Endothelial cell of umbilical vein (primary cell): ENCODE measurements at regions of chr12 and their contacts with region 1.

Region 1: GRCh38 chr12:26274441-26275312 is 79.3 kb downstream of the SSPN start:
- DNase-seq: peak; percentile 98
- H3K4me3 ChIP-seq: no peak overlapping the region
- H3K27ac ChIP-seq: peak overlapping the region; percentile 93
- H3K4me1 ChIP-seq: peaks cover 34% of the 10 kb centered on the region
- H3K27me3 ChIP-seq: no peaks in the 10 kb centered on the region
- CTCF ChIP-seq: no peak
- POLR2A ChIP-seq: peak; percentile 57

Region 2: DNA sequence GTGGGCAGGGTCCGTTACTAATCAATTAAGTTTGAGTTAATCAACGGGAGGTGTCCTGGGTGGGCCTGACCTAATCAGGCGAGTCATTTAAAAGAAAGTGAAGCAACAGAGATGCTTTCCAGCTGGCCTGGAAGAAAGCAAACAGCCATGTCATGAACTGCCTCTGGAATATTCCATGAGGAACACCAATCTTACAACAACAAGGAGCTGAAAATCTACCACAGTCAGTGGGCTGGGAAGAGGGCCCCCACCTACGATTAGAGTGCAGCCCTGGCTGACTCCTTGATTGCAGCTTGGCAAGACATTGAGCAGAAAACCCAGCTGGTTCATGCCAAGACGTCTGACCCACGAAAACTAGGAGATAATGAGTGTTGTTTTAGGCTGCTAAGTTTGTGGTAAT is 23.1 kb before region 1 on chr12:
- CTCF ChIA-PET with region 1: interaction called, 6 read pairs
- POLR2A ChIA-PET with region 1: no interaction called
- dilution Hi-C with region 1: no loop called
- intact Hi-C with region 1: loop called (anchors 1 kb)
- DNase-seq: no peak
- H3K4me3 ChIP-seq: no peak overlapping the region
- H3K27ac ChIP-seq: no peak overlapping the region
- H3K4me1 ChIP-seq: peaks cover 5% of the 10 kb centered on the region
- H3K27me3 ChIP-seq: no peaks in the 10 kb centered on the region
- CTCF ChIP-seq: no peak
- POLR2A ChIP-seq: no peak

Region 3: GRCh38 chr12:26298785-26299621 is 24.3 kb after region 1 on chr12:
- CTCF ChIA-PET with region 1: interaction called, 7 read pairs
- POLR2A ChIA-PET with region 1: no interaction called
- dilution Hi-C with region 1: no loop called
- intact Hi-C with region 1: loop called (anchors 1 kb)
- DNase-seq: peak; percentile 80
- H3K4me3 ChIP-seq: peak overlapping the region in 1 of 3 experiments; percentile 66
- H3K27ac ChIP-seq: peak overlapping the region; percentile 71
- H3K4me1 ChIP-seq: peaks cover 7% of the 10 kb centered on the region
- H3K27me3 ChIP-seq: no peaks in the 10 kb centered on the region
- CTCF ChIP-seq: peak; percentile 25 to 39
- POLR2A ChIP-seq: no peak

Region 4: DNA sequence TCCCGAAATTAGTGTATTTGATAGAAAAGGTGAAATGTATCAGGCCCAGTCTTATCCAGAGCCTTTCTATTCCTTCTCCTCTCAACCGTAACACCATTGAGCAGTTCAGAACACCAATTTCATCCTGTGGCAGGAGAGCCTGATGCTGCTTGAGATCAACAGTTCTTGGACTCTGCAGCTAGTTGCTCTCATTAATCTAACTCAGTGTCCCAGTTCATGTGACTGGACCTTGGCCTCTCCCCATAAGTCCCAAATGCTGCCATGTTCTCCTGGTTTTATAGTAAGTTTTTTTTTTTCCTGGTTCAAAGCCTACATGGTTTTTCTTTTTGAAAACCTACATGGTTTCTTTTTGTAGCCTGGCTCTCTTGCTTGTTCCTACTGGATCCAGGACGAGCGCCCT is 264.5 kb after region 1 on chr12:
- CTCF ChIA-PET with region 1: no interaction called
- POLR2A ChIA-PET with region 1: no interaction called
- dilution Hi-C with region 1: no loop called
- intact Hi-C with region 1: no loop called
- DNase-seq: no peak
- H3K4me3 ChIP-seq: no peak overlapping the region
- H3K27ac ChIP-seq: no peak overlapping the region
- H3K4me1 ChIP-seq: no peaks in the 10 kb centered on the region
- H3K27me3 ChIP-seq: no peaks in the 10 kb centered on the region
- CTCF ChIP-seq: no peak
- POLR2A ChIP-seq: no peak

Region 5: DNA sequence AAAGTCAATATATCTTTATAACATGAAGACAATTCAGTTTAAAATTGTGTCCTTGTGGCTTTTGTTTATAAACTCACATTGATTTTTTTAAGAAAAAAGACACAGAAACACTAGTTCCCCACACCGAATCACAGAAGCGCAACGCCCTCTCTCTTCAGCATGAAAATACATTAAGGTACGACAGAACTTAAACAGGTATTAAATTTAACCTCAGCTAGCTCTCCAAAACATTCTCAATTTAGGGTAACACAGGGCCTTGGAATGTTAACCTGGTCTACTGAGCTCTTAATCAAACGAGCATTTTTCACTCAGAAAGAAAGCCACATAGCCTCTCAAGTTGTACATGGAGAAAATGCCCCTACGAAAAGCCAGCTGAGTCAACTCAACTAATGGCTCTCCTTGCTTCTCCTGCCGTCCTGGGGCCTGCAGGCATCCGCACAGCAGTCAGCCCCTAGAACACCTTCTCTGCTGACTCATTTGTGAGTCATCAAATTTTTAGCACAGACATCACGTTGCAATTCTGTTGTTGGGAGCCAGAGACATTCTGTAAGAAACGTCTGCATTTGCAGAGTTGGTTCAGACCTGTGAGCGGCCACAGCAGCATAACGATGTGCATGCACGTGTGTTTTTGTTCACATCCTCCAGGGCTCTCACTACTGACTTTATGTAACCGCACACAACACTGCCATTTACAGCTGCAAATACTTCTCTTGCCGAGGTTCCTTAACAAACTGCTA is 416.7 kb after region 1 on chr12:
- CTCF ChIA-PET with region 1: no interaction called
- POLR2A ChIA-PET with region 1: interaction called, 5 read pairs
- dilution Hi-C with region 1: no loop called
- intact Hi-C with region 1: loop called (anchors 10 kb)
- DNase-seq: peak; percentile 96
- H3K4me3 ChIP-seq: no peak overlapping the region
- H3K27ac ChIP-seq: peak overlapping the region; percentile 85
- H3K4me1 ChIP-seq: peaks cover 50% of the 10 kb centered on the region
- H3K27me3 ChIP-seq: no peaks in the 10 kb centered on the region
- CTCF ChIP-seq: no peak
- POLR2A ChIP-seq: peak; percentile 79